ENCODE measurements at regions of chr1 and their contacts with region 1.

Region 1: DNA sequence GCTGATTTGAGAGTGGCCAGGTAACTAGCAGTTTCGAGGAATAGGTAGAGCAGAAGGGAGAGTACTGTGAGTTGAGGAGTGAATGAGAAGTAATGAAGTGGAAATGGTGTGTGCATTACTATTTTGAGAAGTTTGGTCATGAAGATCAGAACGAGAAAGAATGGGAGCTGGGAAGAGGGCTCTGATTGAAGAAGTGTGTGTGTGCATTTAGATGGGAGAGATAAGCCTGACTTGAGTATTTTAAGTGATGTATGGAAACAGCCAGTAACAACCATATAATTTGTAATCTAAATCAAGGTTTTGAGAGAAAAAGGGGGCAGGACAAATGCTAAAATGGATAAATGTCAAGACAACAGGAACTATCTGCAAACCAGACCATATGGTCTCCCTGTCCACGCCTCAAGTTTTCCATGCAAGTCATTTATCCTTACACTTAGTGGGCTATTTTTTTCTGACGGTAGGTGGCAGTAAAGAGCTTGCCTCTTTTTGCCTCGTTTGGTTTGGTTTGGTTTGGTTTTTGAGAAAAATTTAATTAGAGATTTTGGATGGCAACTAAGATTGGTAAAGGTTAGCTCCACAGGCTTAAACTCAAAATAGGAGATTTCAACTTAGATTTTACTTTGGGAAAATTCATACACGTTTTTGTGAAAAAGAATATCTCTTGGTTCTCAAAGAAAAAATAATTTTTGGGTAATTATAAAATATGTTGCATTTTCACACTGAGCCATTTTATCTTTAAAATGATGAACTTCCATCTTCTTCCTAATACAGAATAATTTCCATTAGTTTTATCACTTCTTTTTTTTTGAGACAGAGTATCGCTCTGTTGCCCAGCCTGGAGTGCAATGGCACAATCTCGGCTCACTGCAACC is 9.5 kb upstream of the B3GALNT2 start:
- DNase-seq: peak; percentile 54 to 86 (median 57)
- ATAC-seq: peak; percentile 83
- H3K4me3 ChIP-seq: no peak overlapping the region
- H3K27ac ChIP-seq: no peak overlapping the region
- H3K4me1 ChIP-seq: no peaks in the 10 kb centered on the region
- H3K27me3 ChIP-seq: peaks cover 3 to 9% of the 10 kb centered on the region in 2 experiments; a peak in 1 of 5 replicates
- CTCF ChIP-seq: peak; percentile 84 to 98 (median 89)
- EP300 ChIP-seq: no peak
- POLR2A ChIP-seq: no peak
- RAD21 ChIP-seq: peak; percentile 88 to 92

Region 2: DNA sequence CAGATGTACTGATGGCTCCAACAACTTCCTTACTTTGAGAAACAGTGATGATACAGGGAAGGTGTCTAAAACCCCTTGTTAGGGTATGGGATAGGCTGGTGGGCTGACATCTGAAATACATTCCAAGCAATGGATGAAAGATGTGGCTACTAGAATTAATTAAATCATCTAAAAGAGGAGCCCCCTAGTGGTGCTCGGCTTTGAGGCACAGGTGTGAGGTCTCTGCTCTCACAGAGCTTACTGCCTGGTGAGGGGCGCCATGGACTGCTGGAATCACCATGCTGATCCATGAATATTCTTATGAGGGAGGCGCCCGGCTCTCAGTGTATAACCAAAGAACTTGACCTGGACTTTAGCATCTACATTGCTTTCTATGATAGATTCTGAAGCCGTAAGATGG is 87.4 kb after region 1 on chr1:
- CTCF ChIA-PET with region 1: no interaction called
- POLR2A ChIA-PET with region 1: no interaction called
- in situ Hi-C with region 1: no loop called
- intact Hi-C with region 1: loop called (anchors 5 kb)
- DNase-seq: peak in 3 of 4 experiments; percentile 37 to 44 (median 40)
- ATAC-seq: peak; percentile 77
- H3K4me3 ChIP-seq: no peak overlapping the region
- H3K27ac ChIP-seq: no peak overlapping the region
- H3K4me1 ChIP-seq: no peaks in the 10 kb centered on the region
- H3K27me3 ChIP-seq: peaks cover 22 to 63% of the 10 kb centered on the region in 2 experiments
- CTCF ChIP-seq: peak; percentile 59 to 64 (median 62); a peak in 5 of 6 replicates
- EP300 ChIP-seq: no peak
- POLR2A ChIP-seq: no peak
- RAD21 ChIP-seq: peak in 1 of 2 experiments; percentile 34; a peak in 2 of 4 replicates

Region 3: GRCh38 chr1:235739124-235739523 is 225.4 kb after region 1 on chr1:
- CTCF ChIA-PET with region 1: no interaction called
- POLR2A ChIA-PET with region 1: no interaction called
- in situ Hi-C with region 1: loop called (anchors 10 kb)
- intact Hi-C with region 1: no loop called
- DNase-seq: no peak
- ATAC-seq: no peak
- H3K4me3 ChIP-seq: no peak overlapping the region
- H3K27ac ChIP-seq: no peak overlapping the region
- H3K4me1 ChIP-seq: no peaks in the 10 kb centered on the region
- H3K27me3 ChIP-seq: peaks cover 4 to 5% of the 10 kb centered on the region in 2 experiments; a peak in 3 of 5 replicates
- CTCF ChIP-seq: no peak
- EP300 ChIP-seq: no peak
- POLR2A ChIP-seq: no peak
- RAD21 ChIP-seq: no peak

Region 4: GRCh38 chr1:235783148-235783776 is 269.5 kb after region 1 on chr1:
- CTCF ChIA-PET with region 1: interaction called, 15 read pairs
- POLR2A ChIA-PET with region 1: no interaction called
- in situ Hi-C with region 1: no loop called
- intact Hi-C with region 1: loop called (anchors 1 kb)
- DNase-seq: peak in 1 of 4 experiments; percentile 34
- ATAC-seq: peak; percentile 45; the same call in 1 of the 3 replicates
- H3K4me3 ChIP-seq: no peak overlapping the region
- H3K27ac ChIP-seq: no peak overlapping the region
- H3K4me1 ChIP-seq: no peaks in the 10 kb centered on the region
- H3K27me3 ChIP-seq: peaks cover 0 to 4% of the 10 kb centered on the region in 2 experiments; a peak in 1 of 5 replicates
- CTCF ChIP-seq: peak in 2 of 3 experiments; percentile 34 to 73; a peak in 3 of 6 replicates
- EP300 ChIP-seq: no peak
- POLR2A ChIP-seq: no peak
- RAD21 ChIP-seq: peak; percentile 63 to 70

Region 5: DNA sequence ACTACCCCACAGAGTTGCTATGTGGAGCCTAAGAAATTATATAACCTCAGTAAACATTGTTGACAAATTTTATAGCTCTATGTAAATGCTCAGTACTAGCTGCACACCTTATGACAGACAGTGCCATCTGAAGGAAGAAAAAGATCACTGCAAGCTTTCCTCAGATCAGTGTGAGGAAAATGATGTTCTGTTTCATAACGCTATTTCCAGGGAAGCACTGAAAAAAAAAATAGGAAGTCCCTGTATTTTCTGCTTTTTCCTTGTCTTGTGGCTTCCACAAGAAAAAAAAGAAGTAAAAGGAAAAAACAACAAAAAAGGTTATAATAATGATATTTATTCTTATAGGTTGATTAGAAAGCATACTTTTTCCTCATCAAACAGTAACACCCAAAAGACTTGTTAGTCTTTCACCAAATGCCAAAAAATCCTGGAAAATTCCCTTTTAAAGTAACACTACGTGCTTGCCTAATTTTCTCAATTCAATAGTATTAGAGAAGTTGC is 329.8 kb after region 1 on chr1:
- CTCF ChIA-PET with region 1: no interaction called
- POLR2A ChIA-PET with region 1: no interaction called
- in situ Hi-C with region 1: no loop called
- intact Hi-C with region 1: loop called (anchors 10 kb)
- DNase-seq: peak in 3 of 4 experiments; percentile 16 to 28 (median 17)
- ATAC-seq: peak; percentile 92
- H3K4me3 ChIP-seq: no peak overlapping the region
- H3K27ac ChIP-seq: no peak overlapping the region
- H3K4me1 ChIP-seq: no peaks in the 10 kb centered on the region
- H3K27me3 ChIP-seq: peaks cover 0 to 3% of the 10 kb centered on the region in 2 experiments; a peak in 1 of 5 replicates
- CTCF ChIP-seq: peak; percentile 29 to 65 (median 59); a peak in 5 of 6 replicates
- EP300 ChIP-seq: no peak
- POLR2A ChIP-seq: no peak
- RAD21 ChIP-seq: peak; percentile 59

Region 6: DNA sequence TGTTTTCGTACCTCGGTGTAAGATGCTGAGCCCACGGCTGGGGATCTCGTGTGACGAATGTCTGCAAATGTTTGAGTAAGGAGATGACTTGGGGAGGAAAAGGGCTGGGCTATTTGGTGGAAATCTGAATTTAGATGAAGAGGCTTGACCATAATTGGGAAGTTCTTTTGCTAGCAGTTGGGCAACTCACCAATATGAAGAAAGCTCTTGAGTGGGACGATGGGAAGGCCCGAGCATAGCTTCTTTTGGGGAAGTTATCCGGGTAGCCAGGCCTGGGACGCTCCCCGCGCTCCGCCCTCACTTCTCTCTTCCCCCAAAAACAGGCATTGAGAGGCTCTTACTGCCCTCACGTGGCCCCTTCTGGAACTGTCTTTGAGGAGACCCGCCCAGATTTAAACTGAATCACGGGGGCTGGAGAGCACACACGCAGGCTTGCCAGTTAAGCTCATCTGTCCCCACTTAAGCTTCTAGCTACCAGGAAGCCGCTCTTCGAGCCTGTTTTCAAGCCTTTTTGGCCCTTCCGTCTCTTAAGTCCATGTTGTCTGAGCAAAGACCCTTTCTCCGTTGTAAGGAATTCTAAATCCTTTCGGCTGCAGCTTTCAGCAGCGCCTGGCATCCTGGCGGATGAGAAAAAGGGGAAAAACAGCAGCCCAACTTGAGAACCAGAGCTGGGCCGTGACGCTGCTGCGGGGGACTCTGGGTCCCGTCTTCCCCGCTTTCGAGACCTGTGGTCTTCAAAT is 458.0 kb after region 1 on chr1:
- CTCF ChIA-PET with region 1: no interaction called
- POLR2A ChIA-PET with region 1: no interaction called
- in situ Hi-C with region 1: no loop called
- intact Hi-C with region 1: loop called (anchors 5 kb)
- DNase-seq: peak; percentile 73 to 86 (median 78)
- ATAC-seq: peak; percentile 100
- H3K4me3 ChIP-seq: no peak overlapping the region
- H3K27ac ChIP-seq: no peak overlapping the region
- H3K4me1 ChIP-seq: peaks cover 0 to 2% of the 10 kb centered on the region in 2 experiments; a peak in 1 of 5 replicates
- H3K27me3 ChIP-seq: 0 out of 5 replicates have a peak, but pooled peaks cover 0 to 5% of the 10 kb centered on the region in 2 experiments
- CTCF ChIP-seq: peak; percentile 82 to 93 (median 92)
- EP300 ChIP-seq: no peak
- POLR2A ChIP-seq: no peak
- RAD21 ChIP-seq: peak; percentile 81 to 90